ENCODE measurements at regions of chr15 and their contacts with region 1.

Region 1: GRCh38 chr15:69729161-69729748 is 276.6 kb downstream of the RPLP1 start:
- DNase-seq: peak; percentile 63
- CTCF ChIP-seq: peak; percentile 82

Region 2: DNA sequence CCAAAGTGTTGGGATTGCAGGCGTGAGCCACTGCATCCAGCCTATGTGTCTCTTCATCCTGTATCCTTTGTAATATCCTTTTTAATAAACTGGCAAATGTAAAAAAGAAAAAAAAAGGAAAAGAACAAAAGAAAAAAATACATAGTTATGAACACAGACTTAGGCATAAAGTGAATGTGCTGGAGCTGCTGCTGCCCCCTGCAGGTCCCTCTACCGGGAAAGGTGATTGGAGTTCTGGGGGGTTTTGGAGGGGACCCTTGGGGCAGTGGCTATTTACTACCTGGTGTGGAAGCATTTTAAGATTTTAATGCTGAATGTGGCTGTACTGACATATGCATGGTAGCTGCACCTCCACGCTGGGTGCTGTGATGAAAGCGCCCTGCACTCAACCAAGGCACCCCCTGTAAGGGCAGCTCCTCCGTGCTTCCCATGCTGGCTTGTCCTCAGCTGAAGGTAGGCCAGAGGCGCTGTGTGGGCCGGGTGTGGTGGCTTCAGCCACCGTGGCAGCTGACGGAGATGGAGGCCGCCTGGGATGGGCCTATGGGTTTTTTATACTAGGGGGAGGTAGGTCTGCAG is 226.7 kb before region 1 on chr15:
- in situ Hi-C with region 1: no loop called
- DNase-seq: no peak
- CTCF ChIP-seq: peak; percentile 23

Region 3: GRCh38 chr15:70097337-70098169 is 368.3 kb after region 1 on chr15 and contains the start of gene TLE3:
- in situ Hi-C with region 1: loop called (anchors 25 kb)
- DNase-seq: peak; percentile 99
- CTCF ChIP-seq: peak; percentile 64

Region 4: GRCh38 chr15:70271422-70272088 is 542.3 kb after region 1 on chr15:
- in situ Hi-C with region 1: no loop called
- DNase-seq: no peak
- CTCF ChIP-seq: no peak

Region 5: DNA sequence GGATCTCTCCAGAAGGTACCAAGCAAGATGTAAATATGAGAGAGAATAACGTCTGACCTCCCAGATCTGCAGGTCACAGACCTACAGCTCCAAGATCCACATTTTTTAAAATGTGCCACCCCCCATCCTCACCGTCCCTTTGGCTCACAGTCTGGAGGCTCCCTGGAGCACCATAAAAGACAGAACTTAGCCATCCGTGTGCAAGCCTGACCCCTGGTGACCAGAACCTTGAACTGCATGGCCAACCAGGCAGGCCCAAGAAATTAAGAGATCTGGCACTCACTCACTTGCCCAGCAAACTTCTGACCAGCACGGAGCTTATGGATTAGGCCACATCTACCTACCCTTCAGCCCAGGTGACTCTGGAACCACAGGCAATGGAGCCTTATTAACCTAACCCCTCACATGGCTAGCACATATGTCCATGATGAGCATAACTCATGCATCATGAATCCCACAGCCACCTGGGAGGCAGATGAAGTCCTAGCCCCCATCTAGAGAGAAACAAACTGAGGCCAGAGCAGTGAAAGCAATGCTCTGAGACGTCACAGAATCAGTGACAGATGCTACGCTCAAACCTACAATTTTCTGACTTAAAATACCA is 758.8 kb after region 1 on chr15:
- in situ Hi-C with region 1: loop called (anchors 10 kb)
- DNase-seq: peak; percentile 71
- CTCF ChIP-seq: peak; percentile 95